Adrenal gland (tissue), 19 donors: ENCODE measurements at regions of chr6 and their contacts with region 1.

Region 1: GRCh38 chr6:143822584-143823024 is 20.5 kb upstream of the LTV1 start:
- DNase-seq: peak in 2 of 7 donors; percentile 14 to 51
- H3K4me3 ChIP-seq: no peak overlapping the region
- H3K27ac ChIP-seq: peak overlapping the region in 2 of 5 donors; percentile 14 to 32
- H3K4me1 ChIP-seq: peaks cover 10 to 14% of the 10 kb centered on the region in 2 donors
- H3K27me3 ChIP-seq: no peaks in the 10 kb centered on the region
- CTCF ChIP-seq: no peak
- POLR2A ChIP-seq: no peak

Region 2: DNA sequence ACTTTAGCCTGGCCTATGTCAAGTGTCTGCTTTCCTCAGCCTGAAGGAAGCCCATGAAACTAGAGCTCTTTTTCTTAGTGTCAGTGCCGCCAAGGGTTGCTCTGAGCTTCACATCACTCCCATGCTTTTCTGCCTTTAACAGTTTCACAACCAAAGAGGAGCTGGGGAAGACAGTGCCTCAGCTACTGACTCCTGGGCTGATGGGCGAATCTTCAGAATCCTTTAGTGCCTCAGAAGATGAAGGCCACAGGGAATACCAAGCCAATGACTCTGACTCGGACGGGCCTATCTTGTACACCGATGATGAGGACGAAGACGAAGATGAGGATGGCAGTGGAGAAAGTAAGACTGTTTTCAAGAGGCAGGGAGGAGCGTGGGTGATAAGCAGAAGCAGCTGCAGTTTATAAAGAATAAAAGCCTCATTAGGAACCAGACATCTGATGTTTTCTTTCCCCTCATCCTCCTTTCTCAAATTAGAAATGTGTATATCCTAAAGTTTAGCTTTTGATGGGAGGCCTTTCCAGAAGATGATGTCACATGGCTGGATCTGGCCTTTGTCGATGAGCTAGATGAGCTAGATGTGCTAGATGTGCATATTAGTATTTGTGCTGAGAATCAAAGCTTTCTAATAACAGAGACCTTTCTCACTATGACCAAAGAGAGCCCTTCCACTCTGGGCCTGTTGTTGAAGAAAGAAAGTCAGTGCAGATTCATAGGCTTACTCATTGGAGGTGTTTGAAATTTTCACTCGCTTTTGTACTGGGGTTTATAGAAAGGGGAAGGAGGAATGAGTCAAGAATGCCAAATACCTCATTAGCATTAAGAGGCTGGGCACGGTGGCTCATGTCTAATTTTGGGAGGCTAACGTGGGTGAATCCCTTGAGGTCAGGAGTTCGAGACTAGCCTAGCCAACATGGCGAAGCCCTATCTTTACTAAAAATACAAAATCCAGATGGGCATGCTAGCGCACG is 50.2 kb before region 1 on chr6:
- intact Hi-C with region 1: loop called in 1 of 2 experiments (anchors 10 kb)
- DNase-seq: no peak
- H3K4me3 ChIP-seq: no peak overlapping the region
- H3K27ac ChIP-seq: peak overlapping the region in 2 of 5 donors; percentile 35 to 72
- H3K4me1 ChIP-seq: peaks cover 27 to 39% of the 10 kb centered on the region in 2 donors
- H3K27me3 ChIP-seq: no peaks in the 10 kb centered on the region
- CTCF ChIP-seq: no peak
- POLR2A ChIP-seq: no peak